Activated B cell treated with CpG ODN at 0.5 μM for 24 hours (primary cell): ENCODE measurements at regions of chr3 and their contacts with region 1.

Region 1: DNA sequence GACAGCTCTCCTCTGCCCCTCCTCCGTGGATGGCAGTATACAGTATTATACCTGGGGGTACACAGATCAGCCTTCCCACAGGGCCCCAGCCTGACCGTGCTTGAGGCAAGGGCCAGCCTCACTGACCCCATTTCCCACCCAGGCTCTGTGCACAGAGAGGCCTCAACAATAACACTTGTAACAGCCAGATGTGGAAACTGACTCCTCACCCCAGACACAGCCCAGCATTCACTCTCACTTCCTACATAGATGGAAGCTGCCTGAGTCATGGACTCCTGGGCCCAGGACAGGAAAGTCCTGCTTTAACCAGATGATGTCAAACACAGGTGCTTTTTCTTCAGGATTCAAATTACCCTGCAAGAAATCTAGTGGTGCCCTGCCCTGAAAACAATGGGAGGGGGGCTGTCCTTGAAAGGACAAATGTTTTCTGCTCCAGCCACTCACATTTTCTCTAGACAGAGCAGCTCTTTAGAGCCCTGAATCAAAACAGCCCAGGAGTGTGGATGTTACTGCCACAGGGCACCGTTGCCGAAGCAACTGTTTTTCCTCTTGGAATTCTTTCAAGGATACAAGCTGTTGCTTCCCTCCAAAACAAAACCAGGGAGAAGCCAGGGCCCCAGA is 16.4 kb downstream of the CCDC12 start:
- DNase-seq: no peak
- ATAC-seq: peak; percentile 47
- H3K4me3 Mint-ChIP-seq: peak overlapping the region; percentile 57
- H3K27ac Mint-ChIP-seq: peak overlapping the region; percentile 69
- H3K4me1 Mint-ChIP-seq: peaks cover 80% of the 10 kb centered on the region
- H3K27me3 Mint-ChIP-seq: no peaks in the 10 kb centered on the region
- CTCF ChIP-seq: no peak

Region 2: GRCh38 chr3:46921041-46921440 is 39.1 kb before region 1 on chr3:
- CTCF ChIA-PET with region 1: no interaction called
- POLR2A ChIA-PET with region 1: no interaction called
- intact Hi-C with region 1: no loop called
- DNase-seq: no peak
- ATAC-seq: no peak
- H3K4me3 Mint-ChIP-seq: no peak overlapping the region
- H3K27ac Mint-ChIP-seq: no peak overlapping the region
- H3K4me1 Mint-ChIP-seq: peaks cover 32% of the 10 kb centered on the region
- H3K27me3 Mint-ChIP-seq: no peaks in the 10 kb centered on the region
- CTCF ChIP-seq: no peak

Region 3: DNA sequence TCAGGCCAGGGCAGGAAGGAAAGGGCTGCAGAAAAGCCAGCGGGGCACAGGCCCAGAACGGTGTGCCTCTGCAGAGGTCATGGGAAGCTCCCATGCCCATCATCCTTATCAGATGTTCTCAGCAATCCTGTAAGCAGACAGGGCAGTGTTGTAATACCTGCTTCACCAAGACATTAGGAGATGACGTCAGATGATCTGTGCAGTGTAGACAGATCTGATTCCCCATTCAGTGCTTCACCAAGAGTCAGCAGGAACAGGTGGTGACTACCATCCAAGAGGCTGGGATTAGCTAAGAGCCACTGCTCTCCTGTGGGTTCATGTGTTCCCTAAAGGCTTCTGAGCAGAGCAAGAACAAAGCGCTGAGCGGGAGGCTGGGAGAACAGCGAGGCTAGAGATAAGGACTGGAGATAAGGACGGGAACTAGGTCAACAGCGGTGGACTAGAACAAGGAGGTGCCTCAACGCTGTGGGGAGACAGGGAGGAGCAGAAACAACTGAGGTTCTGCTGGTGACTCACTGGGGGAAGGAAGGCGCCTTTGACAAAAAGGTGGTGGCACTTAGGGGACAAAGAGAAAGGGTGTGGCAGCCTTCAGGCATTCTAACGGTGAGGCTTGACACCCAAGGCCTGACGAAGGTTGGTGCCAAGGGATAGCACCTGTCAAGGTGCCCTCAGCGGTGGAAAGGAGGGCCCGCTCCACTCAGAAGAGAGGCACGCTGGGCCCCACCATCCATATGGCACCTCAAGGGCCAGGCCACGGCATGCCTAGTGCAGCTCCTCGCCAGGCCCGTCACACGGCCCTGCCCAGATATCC is 12.0 kb before region 1 on chr3:
- CTCF ChIA-PET with region 1: no interaction called
- POLR2A ChIA-PET with region 1: interaction called, 10 read pairs
- intact Hi-C with region 1: loop called (anchors 1 kb)
- DNase-seq: no peak
- ATAC-seq: no peak
- H3K4me3 Mint-ChIP-seq: peak overlapping the region; percentile 11
- H3K27ac Mint-ChIP-seq: peak overlapping the region; percentile 66
- H3K4me1 Mint-ChIP-seq: peaks cover 90% of the 10 kb centered on the region
- H3K27me3 Mint-ChIP-seq: no peaks in the 10 kb centered on the region
- CTCF ChIP-seq: no peak

Region 4: DNA sequence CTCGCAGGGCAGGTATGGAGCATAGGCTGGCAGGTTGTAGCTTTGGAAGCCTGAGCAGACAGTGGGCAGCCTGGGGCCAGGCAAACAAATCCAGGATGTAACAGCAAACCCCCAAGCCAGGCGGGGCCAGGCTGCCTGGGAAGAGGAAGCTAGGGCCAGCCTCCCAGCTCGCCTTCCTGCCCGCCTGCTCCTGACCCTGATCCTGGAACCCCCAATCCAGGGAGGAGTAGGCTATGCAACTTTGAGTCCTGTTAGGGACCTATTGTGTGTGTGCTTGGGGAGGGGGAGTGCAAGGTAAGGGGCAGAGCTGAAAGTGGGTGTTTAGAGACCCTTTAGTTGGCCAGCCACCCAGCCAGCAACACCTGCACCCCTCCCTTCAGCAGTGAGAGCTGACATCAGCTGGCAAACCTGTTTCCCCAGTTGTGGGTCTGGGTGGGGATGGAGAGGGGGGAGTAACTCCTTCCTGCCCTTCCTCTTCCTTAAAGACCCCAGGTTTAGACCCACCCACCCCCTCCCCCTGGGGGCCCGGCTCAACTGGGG is 21.8 kb after region 1 on chr3:
- CTCF ChIA-PET with region 1: interaction called, 3 read pairs
- POLR2A ChIA-PET with region 1: interaction called, 32 read pairs
- intact Hi-C with region 1: no loop called
- DNase-seq: no peak
- ATAC-seq: no peak
- H3K4me3 Mint-ChIP-seq: peak overlapping the region; percentile 11
- H3K27ac Mint-ChIP-seq: no peak overlapping the region
- H3K4me1 Mint-ChIP-seq: peaks cover 74% of the 10 kb centered on the region
- H3K27me3 Mint-ChIP-seq: no peaks in the 10 kb centered on the region
- CTCF ChIP-seq: no peak